ENCODE measurements at regions of chr9 and their contacts with region 1.

Region 1: GRCh38 chr9:6656614-6657300 is 11.2 kb upstream of the GLDC start:
- DNase-seq: no peak
- ATAC-seq: no peak
- H3K4me3 ChIP-seq: no peak overlapping the region
- H3K4me3 Mint-ChIP-seq: no peak overlapping the region
- H3K27ac ChIP-seq: no peak overlapping the region
- H3K27ac Mint-ChIP-seq: no peak overlapping the region
- H3K4me1 ChIP-seq: peaks cover 4 to 7% of the 10 kb centered on the region in 2 donors
- H3K4me1 Mint-ChIP-seq: peaks cover 9% of the 10 kb centered on the region
- H3K27me3 ChIP-seq: peaks cover 0 to 3% (median 0%) of the 10 kb centered on the region in 4 experiments
- H3K27me3 Mint-ChIP-seq: peaks cover 16% of the 10 kb centered on the region
- CTCF ChIP-seq: no peak

Region 2: GRCh38 chr9:6512085-6512657 is 144.6 kb before region 1 on chr9:
- CTCF ChIA-PET with region 1: no interaction called
- POLR2A ChIA-PET with region 1: no interaction called
- intact Hi-C with region 1: no loop called
- DNase-seq: no peak
- ATAC-seq: no peak
- H3K4me3 ChIP-seq: no peak overlapping the region
- H3K4me3 Mint-ChIP-seq: no peak overlapping the region
- H3K27ac ChIP-seq: no peak overlapping the region
- H3K27ac Mint-ChIP-seq: no peak overlapping the region
- H3K4me1 ChIP-seq: no peaks in the 10 kb centered on the region
- H3K4me1 Mint-ChIP-seq: no peaks in the 10 kb centered on the region
- H3K27me3 ChIP-seq: no peaks in the 10 kb centered on the region
- H3K27me3 Mint-ChIP-seq: no peaks in the 10 kb centered on the region
- CTCF ChIP-seq: no peak

Region 3: DNA sequence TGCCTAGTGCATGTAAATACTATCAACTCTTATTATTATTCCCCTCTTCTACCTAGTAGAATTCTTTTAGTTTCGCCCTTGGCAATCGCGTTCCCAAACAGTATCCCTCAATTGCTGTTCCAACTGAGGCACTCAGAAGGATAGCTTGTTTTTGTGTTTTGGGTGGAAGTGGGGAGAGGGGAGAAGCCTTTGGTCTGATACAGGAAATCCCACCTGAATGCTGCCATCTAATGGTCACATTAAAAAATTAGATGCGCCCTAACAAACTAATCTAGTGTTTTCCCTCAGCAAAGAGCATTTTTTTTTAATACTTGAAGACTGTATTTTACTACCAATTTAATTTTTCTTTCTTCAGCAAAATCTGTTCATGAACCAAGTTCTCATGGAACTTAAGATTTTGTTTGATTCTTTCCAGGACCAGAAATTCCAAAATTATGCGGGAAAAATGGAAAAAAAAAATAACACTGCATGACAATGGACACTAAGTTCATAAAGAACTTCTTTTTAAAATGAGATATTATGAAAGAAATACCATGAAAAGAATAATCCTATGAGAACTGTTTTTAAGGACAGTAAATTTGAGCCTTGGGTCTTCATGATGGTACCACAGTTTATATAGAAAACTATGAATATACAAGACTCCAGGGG is 11.0 kb after region 1 on chr9:
- CTCF ChIA-PET with region 1: interaction called, 11 read pairs
- POLR2A ChIA-PET with region 1: no interaction called
- intact Hi-C with region 1: no loop called
- DNase-seq: peak; percentile 59
- ATAC-seq: peak; percentile 33
- H3K4me3 ChIP-seq: no peak overlapping the region
- H3K4me3 Mint-ChIP-seq: no peak overlapping the region
- H3K27ac ChIP-seq: no peak overlapping the region
- H3K27ac Mint-ChIP-seq: no peak overlapping the region
- H3K4me1 ChIP-seq: no peaks in the 10 kb centered on the region
- H3K4me1 Mint-ChIP-seq: peaks cover 4% of the 10 kb centered on the region
- H3K27me3 ChIP-seq: no peaks in the 10 kb centered on the region
- H3K27me3 Mint-ChIP-seq: no peaks in the 10 kb centered on the region
- CTCF ChIP-seq: peak; percentile 75